Left cardiac atrium (tissue), 4 donors: ENCODE measurements at regions of chr2 and their contacts with region 1.

Region 1: DNA sequence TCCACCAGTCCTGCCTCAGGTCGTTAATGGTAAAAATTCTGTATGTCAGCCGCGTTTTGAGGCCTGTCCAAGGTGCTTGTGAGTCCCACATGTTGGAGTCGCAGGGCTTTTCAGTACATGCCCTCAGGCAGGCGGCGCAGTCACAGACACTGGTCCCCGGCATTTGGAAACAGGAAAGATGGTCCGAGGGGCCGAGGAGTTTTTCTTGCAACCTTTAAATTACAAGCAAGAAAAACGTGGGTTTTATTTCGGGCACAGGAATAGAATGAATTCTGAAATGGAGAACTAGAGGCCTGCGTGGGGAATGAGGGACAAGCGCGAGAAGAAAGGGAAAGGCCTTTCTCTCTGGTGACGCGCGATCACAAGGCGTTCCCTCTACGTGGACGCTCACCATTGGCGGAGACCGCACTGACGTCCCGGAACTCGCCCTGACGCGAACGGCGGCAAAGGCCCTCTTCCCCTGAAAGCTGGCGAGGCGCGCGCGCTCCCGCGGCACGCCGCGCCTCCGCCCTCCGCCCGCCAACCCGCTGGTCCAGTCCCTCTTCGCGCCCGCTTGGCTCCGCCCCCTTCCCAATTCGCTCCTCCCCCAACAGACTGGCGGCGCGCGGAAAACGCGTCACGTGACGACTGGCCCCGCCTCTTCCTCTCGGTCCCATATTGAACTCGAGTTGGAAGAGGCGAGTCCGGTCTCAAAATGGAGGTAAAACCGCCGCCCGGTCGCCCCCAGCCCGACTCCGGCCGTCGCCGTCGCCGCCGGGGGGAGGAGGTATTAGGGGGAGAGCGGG is at the start of gene HNRNPA3:
- DNase-seq: peak; percentile 99
- ATAC-seq: peak; percentile 95 to 96
- total RNA-seq, gene HNRNPA3: 81.3 to 117 TPM

Region 2: DNA sequence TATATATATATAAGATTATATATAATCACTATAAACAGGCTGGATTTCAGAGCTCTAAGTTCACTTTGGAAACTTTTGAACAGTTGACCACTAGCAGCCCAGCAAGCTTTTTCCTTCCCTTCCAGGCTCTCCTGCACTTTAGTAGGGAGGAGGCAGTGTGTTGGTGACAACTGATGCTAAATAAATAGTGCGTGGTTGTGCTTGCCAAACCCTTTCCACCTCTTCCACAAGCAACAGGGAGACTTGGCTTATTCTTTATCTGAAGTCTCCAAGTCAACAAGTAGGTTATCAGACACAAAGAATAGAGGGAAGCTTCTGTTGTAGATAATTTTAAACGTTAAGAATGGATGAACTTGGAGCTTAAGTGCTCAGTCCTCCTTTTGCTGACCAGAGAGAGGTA is 407.9 kb before region 1 on chr2:
- intact Hi-C with region 1: no loop called
- DNase-seq: no peak
- ATAC-seq: no peak

Region 3: DNA sequence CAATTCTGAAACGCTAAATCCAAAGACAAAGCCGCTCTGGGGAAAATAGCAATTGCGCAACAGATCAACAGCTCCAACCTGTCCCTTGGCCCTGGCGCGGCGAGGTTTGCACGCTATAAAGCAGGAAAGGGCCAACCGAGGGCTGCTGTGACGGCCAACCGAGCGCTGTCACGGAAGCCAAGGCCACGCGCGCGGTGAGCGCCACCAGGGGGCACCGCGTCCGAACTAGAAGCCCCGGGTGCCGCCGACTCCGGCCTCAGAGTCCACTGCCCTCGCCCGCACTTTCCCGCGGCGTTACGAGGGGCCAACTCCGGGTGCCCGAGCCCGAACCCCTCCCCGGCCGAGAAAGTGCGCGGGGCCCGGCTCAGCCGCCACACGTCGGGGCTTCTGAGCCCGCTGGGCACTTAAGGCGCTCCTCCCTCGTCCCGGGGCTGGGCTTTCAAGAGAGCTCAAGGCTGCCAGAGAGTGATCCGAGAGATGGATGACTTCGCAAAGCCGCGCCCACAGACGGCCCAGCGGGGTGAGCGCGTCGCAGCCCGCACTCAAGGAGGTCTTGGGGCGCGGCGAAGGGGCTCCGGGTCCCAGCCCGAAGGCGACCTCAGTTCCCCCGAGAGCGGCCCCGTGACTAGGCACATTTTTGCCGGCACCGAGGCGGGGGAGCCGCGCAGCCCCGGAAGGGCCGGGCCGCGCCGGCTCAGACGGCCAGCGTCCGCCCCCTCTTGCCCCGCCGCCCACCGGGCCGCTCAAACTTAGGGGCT is 51.3 kb after region 1 on chr2:
- intact Hi-C with region 1: loop called (anchors 1 to 10 kb)
- DNase-seq: peak; percentile 98
- ATAC-seq: peak; percentile 74 to 75

Region 4: GRCh38 chr2:177724398-177725287 is 512.3 kb after region 1 on chr2:
- intact Hi-C with region 1: no loop called
- DNase-seq: peak; percentile 41
- ATAC-seq: peak; percentile 66 to 71